Activated CD4-positive, alpha-beta T cell treated with anti-CD3 and anti-CD28 coated beads for 36 hours (primary cell): ENCODE measurements at regions of chr22 and their contacts with region 1.

Region 1: GRCh38 chr22:30591588-30592359 is at the start of gene PES1:
- DNase-seq: peak; percentile 96
- ATAC-seq: peak; percentile 100
- H3K4me3 Mint-ChIP-seq: no peak within 1 kb of the TSS
- H3K27ac Mint-ChIP-seq: no peak within 1 kb of the TSS
- H3K4me1 Mint-ChIP-seq: no peaks in the 10 kb centered on the region
- H3K27me3 Mint-ChIP-seq: peaks cover 4% of the 10 kb centered on the region
- total RNA-seq, gene PES1: 134 to 137 TPM

Region 2: DNA sequence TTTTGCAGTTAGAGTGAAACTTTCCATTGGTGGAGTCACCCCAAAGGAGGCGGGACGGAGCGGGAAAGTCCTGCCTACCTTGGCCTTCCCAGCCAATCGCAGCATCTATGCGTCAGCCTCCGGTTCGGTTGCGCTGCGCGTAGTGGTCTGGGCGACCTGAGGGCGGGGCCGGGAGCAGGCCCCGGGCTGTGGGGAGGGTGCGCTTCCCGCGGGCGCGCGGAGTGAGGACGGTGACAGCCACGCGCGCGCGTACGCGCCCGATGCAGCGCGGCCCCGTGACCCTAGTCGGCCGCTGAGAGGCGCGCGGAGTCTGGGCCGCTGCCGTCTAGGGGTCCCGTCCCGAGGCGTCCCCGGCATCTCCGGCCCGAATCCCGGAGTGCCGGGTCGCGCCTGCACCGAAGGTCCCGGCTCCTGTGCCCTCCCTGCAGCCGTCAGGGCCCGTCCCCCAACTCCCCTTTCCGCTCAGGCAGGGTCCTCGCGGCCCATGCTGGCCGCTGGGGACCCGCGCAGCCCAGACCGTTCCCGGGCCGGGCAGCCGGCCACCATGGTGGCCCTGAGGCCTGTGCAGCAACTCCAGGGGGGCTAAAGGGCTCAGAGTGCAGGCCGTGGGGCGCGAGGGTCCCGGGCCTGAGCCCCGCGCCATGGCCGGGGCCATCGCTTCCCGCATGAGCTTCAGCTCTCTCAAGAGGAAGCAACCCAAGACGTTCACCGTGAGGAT is 988.3 kb before region 1 on chr22 and contains the start of gene NF2:
- CTCF ChIA-PET with region 1: no interaction called
- POLR2A ChIA-PET with region 1: no interaction called
- intact Hi-C with region 1: loop called in 1 of 2 experiments (anchors 5 kb)
- DNase-seq: peak; percentile 99
- ATAC-seq: peak; percentile 97
- H3K4me3 Mint-ChIP-seq: peak within 1 kb of the TSS; percentile 92
- H3K27ac Mint-ChIP-seq: peak within 1 kb of the TSS; percentile 97
- H3K4me1 Mint-ChIP-seq: peaks cover 29% of the 10 kb centered on the region
- H3K27me3 Mint-ChIP-seq: no peaks in the 10 kb centered on the region
- total RNA-seq, gene NF2: 40.2 to 43.1 TPM

Region 3: GRCh38 chr22:30262917-30263741 is 328.6 kb before region 1 on chr22:
- CTCF ChIA-PET with region 1: no interaction called
- POLR2A ChIA-PET with region 1: no interaction called
- intact Hi-C with region 1: loop called in 1 of 2 experiments (anchors 2 kb)
- DNase-seq: peak; percentile 88
- ATAC-seq: no peak
- H3K4me3 Mint-ChIP-seq: peak overlapping the region; percentile 62
- H3K27ac Mint-ChIP-seq: peak overlapping the region; percentile 51
- H3K4me1 Mint-ChIP-seq: peaks cover 33% of the 10 kb centered on the region
- H3K27me3 Mint-ChIP-seq: no peaks in the 10 kb centered on the region

Region 4: DNA sequence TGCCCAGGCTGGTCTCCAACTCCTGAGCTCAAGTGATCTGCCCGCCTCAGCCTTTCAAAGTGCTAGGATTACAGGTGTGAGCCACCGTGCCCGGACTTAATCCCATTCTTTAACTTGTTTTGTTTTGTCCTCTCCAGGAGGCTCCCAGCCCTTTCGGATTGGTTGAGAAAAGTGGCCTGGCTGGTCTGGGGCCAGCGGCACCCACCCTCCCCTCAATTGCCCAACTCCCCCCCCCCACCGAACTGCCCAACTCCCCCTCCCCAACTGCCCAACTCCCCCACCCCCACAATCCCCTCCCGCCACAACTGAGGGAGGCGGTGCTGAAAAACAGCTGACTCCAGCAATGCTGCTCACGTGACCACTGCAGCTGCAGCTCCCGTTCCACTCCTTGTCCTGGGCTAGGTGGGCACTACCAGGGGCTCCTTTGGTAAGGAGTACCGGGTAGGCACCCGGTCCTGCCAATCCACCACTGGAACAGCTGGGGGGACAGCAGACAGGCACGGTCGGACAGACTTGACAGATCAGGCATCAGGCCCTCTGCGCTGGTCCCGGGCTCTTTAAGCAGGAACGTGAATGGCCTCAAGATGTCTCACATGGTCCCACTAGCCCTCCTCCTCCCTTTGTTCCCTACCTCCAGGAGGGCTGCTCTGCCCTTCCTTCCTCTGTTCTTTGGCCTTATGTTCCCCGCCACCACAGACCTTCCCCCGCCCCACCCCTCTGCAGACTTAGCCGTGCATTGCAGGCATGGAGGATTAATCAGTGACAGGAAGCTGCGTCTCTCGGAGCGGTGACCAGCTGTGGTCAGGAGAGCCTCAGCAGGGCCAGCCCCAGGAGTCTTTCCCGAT is 14.9 kb after region 1 on chr22 and contains the start of gene TCN2:
- CTCF ChIA-PET with region 1: interaction called, 8 read pairs
- POLR2A ChIA-PET with region 1: no interaction called
- intact Hi-C with region 1: loop called in 1 of 2 experiments (anchors 1 kb)
- DNase-seq: peak; percentile 73
- ATAC-seq: peak; percentile 69
- H3K4me3 Mint-ChIP-seq: peak within 1 kb of the TSS; percentile 52
- H3K27ac Mint-ChIP-seq: peak within 1 kb of the TSS; percentile 55
- H3K4me1 Mint-ChIP-seq: peaks cover 30% of the 10 kb centered on the region
- H3K27me3 Mint-ChIP-seq: peaks cover 2% of the 10 kb centered on the region
- total RNA-seq, gene TCN2: 0.12 to 0.32 TPM

Region 5: DNA sequence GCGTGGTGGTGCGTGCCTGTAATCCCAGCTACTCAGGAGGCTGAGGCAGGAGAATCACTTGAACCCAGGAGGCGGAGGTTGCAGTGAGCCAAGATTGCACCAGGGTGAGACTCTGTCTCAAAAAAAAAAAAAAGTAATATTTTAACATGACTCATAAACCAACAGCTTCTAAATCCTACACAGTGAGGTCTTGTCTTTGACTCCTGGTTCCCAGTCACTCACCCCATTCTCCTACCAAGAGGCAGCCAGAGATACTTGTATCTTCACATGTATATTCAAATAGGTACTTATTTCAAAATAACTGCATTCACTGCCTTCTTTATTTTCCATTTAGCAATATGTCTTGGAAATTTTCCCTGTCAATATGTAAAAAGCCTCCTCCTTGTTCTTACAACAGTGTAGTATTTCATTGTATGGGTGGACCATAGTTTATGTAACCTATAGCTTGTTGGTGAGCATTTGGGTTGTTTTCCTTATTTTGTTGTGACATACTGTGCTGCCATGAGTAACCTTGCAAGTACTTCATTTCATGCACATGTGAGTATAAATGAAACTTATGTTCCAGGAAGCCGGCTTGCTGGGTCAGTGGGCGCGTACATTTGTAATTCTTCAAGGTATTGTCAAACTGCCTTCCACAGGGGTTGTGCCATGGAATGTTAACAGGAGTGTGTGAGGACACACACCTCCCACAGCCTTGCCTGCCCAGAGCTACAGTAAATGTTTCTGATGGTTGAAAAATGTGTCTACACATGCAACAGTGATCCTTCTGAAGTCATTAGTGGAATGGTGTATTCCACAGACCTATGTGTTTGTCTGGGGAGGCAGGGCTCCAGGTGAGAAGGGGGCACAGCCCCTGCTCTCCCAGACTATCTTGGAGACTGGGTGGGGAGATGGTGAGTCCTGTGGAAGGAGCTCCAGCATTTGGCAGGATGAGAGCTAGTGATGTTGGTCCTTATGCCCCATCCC is 150.8 kb after region 1 on chr22:
- CTCF ChIA-PET with region 1: no interaction called
- POLR2A ChIA-PET with region 1: no interaction called
- intact Hi-C with region 1: loop called in 1 of 2 experiments (anchors 1 kb)
- DNase-seq: peak; percentile 69
- ATAC-seq: peak; percentile 61
- H3K4me3 Mint-ChIP-seq: peak overlapping the region; percentile 6
- H3K27ac Mint-ChIP-seq: peak overlapping the region; percentile 82
- H3K4me1 Mint-ChIP-seq: peaks cover 64% of the 10 kb centered on the region
- H3K27me3 Mint-ChIP-seq: peaks cover 7% of the 10 kb centered on the region

Region 6: DNA sequence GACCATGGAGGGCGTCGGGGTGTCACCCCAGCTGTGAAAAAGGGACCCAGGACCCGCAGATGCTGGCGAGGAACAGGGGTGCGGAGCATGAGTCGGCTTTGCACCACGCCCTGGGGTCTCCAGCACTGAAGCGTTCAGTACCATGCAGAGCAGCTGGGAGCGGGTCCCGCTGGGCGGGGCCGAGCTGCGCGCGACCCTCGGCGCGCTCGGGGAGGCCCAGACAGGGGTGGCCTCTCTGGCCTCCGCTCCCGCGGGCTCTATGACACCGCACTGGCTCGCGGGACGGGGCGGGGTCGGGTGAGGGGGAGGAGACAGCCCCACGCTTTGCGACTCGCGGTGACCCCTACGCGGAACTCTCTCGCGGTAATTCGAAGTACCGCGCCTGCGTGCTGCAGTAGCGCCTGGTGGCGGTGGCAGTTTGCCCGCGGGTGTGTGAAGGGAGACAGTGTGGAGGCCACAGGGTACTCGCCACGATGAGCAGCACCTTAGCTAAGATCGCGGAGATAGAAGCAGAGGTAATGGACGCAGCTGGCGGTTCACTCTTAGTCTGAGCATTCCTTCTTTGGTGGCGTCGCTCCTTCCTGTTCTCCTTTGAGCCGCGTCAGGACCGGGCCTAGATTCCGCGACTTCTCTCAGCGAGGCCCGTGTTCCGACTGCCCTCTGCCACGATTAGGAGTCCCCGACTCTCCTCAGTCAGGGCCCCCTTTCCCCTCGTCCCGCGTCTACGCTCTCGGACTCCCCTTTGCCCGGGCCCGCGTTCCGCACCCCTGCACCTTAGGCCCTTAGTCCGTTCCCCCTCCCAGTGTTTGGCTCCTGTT is 807.6 kb after region 1 on chr22 and contains the start of gene DRG1:
- CTCF ChIA-PET with region 1: no interaction called
- POLR2A ChIA-PET with region 1: no interaction called
- intact Hi-C with region 1: loop called in 1 of 2 experiments (anchors 2 kb)
- DNase-seq: peak; percentile 99
- ATAC-seq: peak; percentile 98
- H3K4me3 Mint-ChIP-seq: peak within 1 kb of the TSS; percentile 99
- H3K27ac Mint-ChIP-seq: peak within 1 kb of the TSS; percentile 91
- H3K4me1 Mint-ChIP-seq: peaks cover 18% of the 10 kb centered on the region
- H3K27me3 Mint-ChIP-seq: peaks cover under 1% of the 10 kb centered on the region
- total RNA-seq, gene DRG1: 104 to 106 TPM